Activated T-helper 2 cell treated with anti-CD3 and anti-CD28 coated beads, Interferon-gamma antibody, Interleukin-2, Interleukin-4, amounts not matched to agents 10 μg/mL and 5 μg/mL and 100 μg/mL, durations not matched to agents 14 hours and 24 hours and 36 hours (primary cell): ENCODE measurements at regions of chr1 and their contacts with region 1.

Region 1: GRCh38 chr1:178752891-178753290 is 27.8 kb downstream of the RALGPS2 start:
- DNase-seq: no peak
- H3K4me3 Mint-ChIP-seq: no peak overlapping the region
- H3K27ac Mint-ChIP-seq: no peak overlapping the region
- H3K4me1 Mint-ChIP-seq: no peaks in the 10 kb centered on the region
- H3K27me3 Mint-ChIP-seq: no peaks in the 10 kb centered on the region

Region 2: GRCh38 chr1:178532392-178532791 is 220.5 kb before region 1 on chr1:
- intact Hi-C with region 1: loop called (anchors 2 kb)
- DNase-seq: peak; percentile 48
- H3K4me3 Mint-ChIP-seq: no peak overlapping the region
- H3K27ac Mint-ChIP-seq: no peak overlapping the region
- H3K4me1 Mint-ChIP-seq: no peaks in the 10 kb centered on the region
- H3K27me3 Mint-ChIP-seq: peaks cover 2% of the 10 kb centered on the region

Region 3: GRCh38 chr1:178818416-178818815 is 65.5 kb after region 1 on chr1:
- intact Hi-C with region 1: no loop called
- DNase-seq: no peak
- H3K4me3 Mint-ChIP-seq: no peak overlapping the region
- H3K27ac Mint-ChIP-seq: no peak overlapping the region
- H3K4me1 Mint-ChIP-seq: peaks cover 7% of the 10 kb centered on the region
- H3K27me3 Mint-ChIP-seq: no peaks in the 10 kb centered on the region

Region 4: DNA sequence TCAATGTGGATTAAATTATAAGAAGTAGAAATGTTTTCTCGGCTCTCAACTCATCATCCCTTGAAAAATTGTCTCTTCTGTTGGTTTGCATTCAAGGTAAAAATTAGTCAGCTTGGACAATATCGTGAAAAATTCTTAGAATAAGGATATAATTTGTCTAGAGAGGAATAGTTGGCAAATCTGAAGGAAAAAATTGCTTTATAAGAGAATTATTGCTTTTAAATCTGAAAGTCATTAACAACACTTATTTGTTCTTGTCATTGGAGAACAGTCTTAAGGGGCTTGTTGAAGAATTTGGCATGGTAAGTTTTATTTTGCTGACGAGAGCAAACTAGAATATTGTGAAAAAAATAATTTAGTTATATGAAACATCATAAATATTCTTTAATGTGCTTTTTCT is 91.5 kb after region 1 on chr1:
- intact Hi-C with region 1: no loop called
- DNase-seq: no peak
- H3K4me3 Mint-ChIP-seq: no peak overlapping the region
- H3K27ac Mint-ChIP-seq: no peak overlapping the region
- H3K4me1 Mint-ChIP-seq: no peaks in the 10 kb centered on the region
- H3K27me3 Mint-ChIP-seq: no peaks in the 10 kb centered on the region